Activated CD4-positive, alpha-beta T cell treated with anti-CD3 and anti-CD28 coated beads for 36 hours (primary cell): ENCODE measurements at regions of chr10 and their contacts with region 1.

Region 1: DNA sequence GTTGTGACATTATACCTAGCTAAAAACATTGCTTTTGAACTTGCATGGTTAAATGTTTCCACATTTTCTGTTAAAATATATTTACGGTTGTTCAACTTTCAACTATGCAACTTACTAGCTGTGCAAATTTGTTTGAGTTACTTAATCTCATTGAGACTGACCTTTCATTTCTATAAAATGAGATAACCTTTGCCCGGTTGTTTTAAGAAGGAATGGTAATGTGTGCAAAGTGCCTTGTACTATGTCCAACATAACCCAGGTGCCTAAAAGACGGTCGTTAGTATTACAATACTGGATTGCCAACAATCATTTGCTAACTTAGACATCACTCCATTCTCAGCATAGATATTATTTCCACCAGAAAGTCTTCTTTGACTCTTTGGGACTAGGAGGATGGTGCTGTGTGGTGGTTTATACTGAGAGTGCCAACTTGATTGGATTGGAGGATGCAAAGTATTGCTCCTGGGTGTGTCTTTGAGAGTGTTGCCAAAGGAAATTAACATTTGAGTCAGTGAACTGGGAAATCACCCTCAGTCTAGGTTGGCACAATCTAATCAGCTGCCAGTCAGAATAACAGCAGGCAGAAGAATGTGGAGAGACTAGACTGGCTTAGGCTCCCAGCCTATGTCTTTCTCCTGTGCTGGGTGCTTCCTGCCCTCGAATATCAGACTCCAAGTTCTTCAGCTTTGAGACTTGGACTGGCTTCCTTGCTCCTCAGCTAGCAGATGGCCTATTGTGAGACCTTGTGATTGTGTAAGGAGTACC is 85.2 kb upstream of the PDSS1 start:
- DNase-seq: no peak
- ATAC-seq: peak; percentile 42
- H3K4me3 Mint-ChIP-seq: no peak overlapping the region
- H3K27ac Mint-ChIP-seq: no peak overlapping the region
- H3K4me1 Mint-ChIP-seq: no peaks in the 10 kb centered on the region
- H3K27me3 Mint-ChIP-seq: no peaks in the 10 kb centered on the region

Region 2: GRCh38 chr10:26157734-26158133 is 454.6 kb before region 1 on chr10:
- CTCF ChIA-PET with region 1: no interaction called
- POLR2A ChIA-PET with region 1: no interaction called
- intact Hi-C with region 1: no loop called
- DNase-seq: no peak
- ATAC-seq: no peak
- H3K4me3 Mint-ChIP-seq: no peak overlapping the region
- H3K27ac Mint-ChIP-seq: no peak overlapping the region
- H3K4me1 Mint-ChIP-seq: no peaks in the 10 kb centered on the region
- H3K27me3 Mint-ChIP-seq: peaks cover 11% of the 10 kb centered on the region

Region 3: GRCh38 chr10:26430641-26431164 is 181.6 kb before region 1 on chr10:
- CTCF ChIA-PET with region 1: no interaction called
- POLR2A ChIA-PET with region 1: no interaction called
- intact Hi-C with region 1: no loop called
- DNase-seq: peak; percentile 46
- ATAC-seq: peak; percentile 97
- H3K4me3 Mint-ChIP-seq: peak overlapping the region; percentile 43
- H3K27ac Mint-ChIP-seq: peak overlapping the region; percentile 92
- H3K4me1 Mint-ChIP-seq: peaks cover 29% of the 10 kb centered on the region
- H3K27me3 Mint-ChIP-seq: no peaks in the 10 kb centered on the region

Region 4: GRCh38 chr10:26682931-26683330 is 70.6 kb after region 1 on chr10:
- CTCF ChIA-PET with region 1: interaction called, 3 read pairs
- POLR2A ChIA-PET with region 1: no interaction called
- intact Hi-C with region 1: loop called in 1 of 2 experiments (anchors 10 kb)
- DNase-seq: no peak
- ATAC-seq: no peak
- H3K4me3 Mint-ChIP-seq: no peak overlapping the region
- H3K27ac Mint-ChIP-seq: peak overlapping the region; percentile 63
- H3K4me1 Mint-ChIP-seq: peaks cover 27% of the 10 kb centered on the region
- H3K27me3 Mint-ChIP-seq: no peaks in the 10 kb centered on the region